Activated naive CD4-positive, alpha-beta T cell treated with anti-CD3 and anti-CD28 coated beads, Interleukin-2, amount 10 ng/mL, durations not matched to agents 7 days and 5 days (primary cell): ENCODE measurements at regions of chr14 and their contacts with region 1.

Region 1: DNA sequence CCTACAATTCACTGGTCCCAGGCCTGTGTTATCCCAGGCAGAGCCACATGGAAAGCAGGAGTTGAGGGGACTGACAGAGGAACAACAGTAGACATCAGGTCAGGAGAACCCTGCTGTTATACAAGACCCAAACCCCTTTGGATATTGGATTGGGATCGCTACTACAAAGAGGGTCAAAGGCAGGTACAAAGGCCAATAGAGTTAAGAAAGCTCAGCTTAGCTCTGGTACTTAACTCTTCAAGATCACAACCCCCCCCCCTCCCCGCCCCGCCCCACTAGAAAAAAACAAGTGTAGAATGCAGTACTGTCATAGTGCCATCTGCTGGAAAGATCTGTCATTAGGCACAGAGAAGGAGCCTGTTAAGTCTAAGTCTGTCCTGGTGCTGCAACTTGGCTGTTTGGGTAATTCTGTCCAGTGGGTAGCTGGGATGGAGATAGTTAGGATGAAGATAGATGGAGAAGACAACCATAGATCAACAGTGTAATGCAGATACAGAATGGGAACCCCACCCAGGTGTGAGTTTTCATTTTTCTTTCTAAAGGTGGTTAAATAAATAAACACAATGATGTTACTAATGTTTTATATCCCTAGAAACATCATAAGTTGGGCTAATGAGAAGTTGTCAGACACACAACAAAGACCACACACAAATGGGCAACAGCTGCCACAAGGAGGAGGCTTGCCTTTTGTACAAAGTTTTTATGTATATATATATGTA is 17.2 kb downstream of the REM2 start:
- DNase-seq: peak; percentile 65
- H3K4me3 Mint-ChIP-seq: no peak overlapping the region
- H3K27ac Mint-ChIP-seq: no peak overlapping the region
- H3K4me1 Mint-ChIP-seq: peaks cover 19% of the 10 kb centered on the region
- H3K27me3 Mint-ChIP-seq: no peaks in the 10 kb centered on the region

Region 2: GRCh38 chr14:22822571-22823098 is 77.6 kb before region 1 on chr14:
- CTCF ChIA-PET with region 1: interaction called, 40 read pairs
- DNase-seq: peak; percentile 77
- H3K4me3 Mint-ChIP-seq: peak overlapping the region; percentile 46
- H3K27ac Mint-ChIP-seq: no peak overlapping the region
- H3K4me1 Mint-ChIP-seq: peaks cover 37% of the 10 kb centered on the region
- H3K27me3 Mint-ChIP-seq: peaks cover 58% of the 10 kb centered on the region

Region 3: GRCh38 chr14:22872033-22872832 is 28.0 kb before region 1 on chr14:
- CTCF ChIA-PET with region 1: interaction called, 55 read pairs
- DNase-seq: peak; percentile 82
- H3K4me3 Mint-ChIP-seq: peak overlapping the region; percentile 95
- H3K27ac Mint-ChIP-seq: peak overlapping the region; percentile 97
- H3K4me1 Mint-ChIP-seq: peaks cover 37% of the 10 kb centered on the region
- H3K27me3 Mint-ChIP-seq: no peaks in the 10 kb centered on the region

Region 4: GRCh38 chr14:22886500-22887259 is 13.6 kb before region 1 on chr14:
- CTCF ChIA-PET with region 1: interaction called, 16 read pairs
- DNase-seq: peak; percentile 86
- H3K4me3 Mint-ChIP-seq: peak overlapping the region; percentile 87
- H3K27ac Mint-ChIP-seq: peak overlapping the region; percentile 95
- H3K4me1 Mint-ChIP-seq: peaks cover 53% of the 10 kb centered on the region
- H3K27me3 Mint-ChIP-seq: peaks cover 47% of the 10 kb centered on the region

Region 5: DNA sequence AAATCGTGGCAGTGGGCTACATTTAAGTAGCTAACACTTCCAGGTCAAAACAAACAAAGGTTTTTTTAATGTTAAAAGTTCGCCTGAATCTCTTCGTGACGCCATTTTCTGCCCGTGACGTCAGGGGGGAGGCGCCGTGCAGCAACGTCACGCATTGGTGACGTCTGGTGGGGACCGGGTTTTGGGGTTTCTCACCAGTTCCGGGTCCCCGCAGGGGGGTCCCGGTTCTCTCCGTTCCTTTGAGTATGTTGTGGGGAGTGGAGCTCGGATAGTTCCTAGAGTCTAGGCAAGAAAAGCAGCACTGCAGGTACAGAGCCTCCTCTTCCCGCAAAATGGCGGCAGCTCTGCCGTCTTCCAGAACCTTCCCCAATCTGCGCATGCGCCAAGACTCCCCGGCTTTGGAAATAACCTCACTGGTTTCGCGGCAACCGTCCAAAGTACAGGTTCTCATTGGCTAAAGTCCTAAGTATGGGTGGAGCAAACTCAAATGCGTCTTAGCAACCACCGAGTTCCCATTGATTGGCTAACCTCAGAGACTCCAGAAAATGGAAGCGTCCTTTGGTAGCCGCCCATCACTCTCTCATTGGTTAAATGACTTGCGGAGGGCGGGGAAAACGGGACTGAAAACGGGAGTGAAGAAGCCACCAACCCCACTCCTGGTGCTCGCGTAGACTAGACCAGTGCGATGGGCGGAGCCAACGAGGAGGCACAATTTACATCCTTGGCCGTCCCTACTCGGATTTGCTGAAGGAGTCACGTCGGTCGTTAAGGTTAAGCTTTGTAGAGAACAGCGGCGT is 18.8 kb after region 1 on chr14 and contains the start of gene RBM23:
- CTCF ChIA-PET with region 1: interaction called, 16 read pairs
- DNase-seq: peak; percentile 100
- H3K4me3 Mint-ChIP-seq: peak within 1 kb of the TSS; percentile 99
- H3K27ac Mint-ChIP-seq: peak within 1 kb of the TSS; percentile 100
- H3K4me1 Mint-ChIP-seq: peaks cover 45% of the 10 kb centered on the region
- H3K27me3 Mint-ChIP-seq: peaks cover 6% of the 10 kb centered on the region